Adrenal gland (tissue), 19 donors: ENCODE measurements at regions of chr9 and their contacts with region 1.

Region 1: GRCh38 chr9:38404314-38404713 is 11.8 kb downstream of the ALDH1B1 start:
- DNase-seq: no peak
- H3K4me3 ChIP-seq: no peak overlapping the region
- H3K27ac ChIP-seq: no peak overlapping the region
- H3K4me1 ChIP-seq: no peaks in the 10 kb centered on the region
- H3K27me3 ChIP-seq: no peaks in the 10 kb centered on the region
- CTCF ChIP-seq: no peak
- POLR2A ChIP-seq: no peak

Region 2: GRCh38 chr9:37746848-37747753 is 657.2 kb before region 1 on chr9:
- intact Hi-C with region 1: loop called in 1 of 2 experiments (anchors 5 kb)
- DNase-seq: peak; percentile 65 to 84 (median 75)
- H3K4me3 ChIP-seq: no peak overlapping the region
- H3K27ac ChIP-seq: peak overlapping the region in 2 of 5 donors; percentile 13 to 41
- H3K4me1 ChIP-seq: peaks cover 0 to 4% of the 10 kb centered on the region in 2 donors
- H3K27me3 ChIP-seq: no peaks in the 10 kb centered on the region
- CTCF ChIP-seq: peak; percentile 73 to 94 (median 85)
- POLR2A ChIP-seq: no peak